Calu3 (cell line): ENCODE measurements at regions of chr14 and their contacts with region 1.

Region 1: DNA sequence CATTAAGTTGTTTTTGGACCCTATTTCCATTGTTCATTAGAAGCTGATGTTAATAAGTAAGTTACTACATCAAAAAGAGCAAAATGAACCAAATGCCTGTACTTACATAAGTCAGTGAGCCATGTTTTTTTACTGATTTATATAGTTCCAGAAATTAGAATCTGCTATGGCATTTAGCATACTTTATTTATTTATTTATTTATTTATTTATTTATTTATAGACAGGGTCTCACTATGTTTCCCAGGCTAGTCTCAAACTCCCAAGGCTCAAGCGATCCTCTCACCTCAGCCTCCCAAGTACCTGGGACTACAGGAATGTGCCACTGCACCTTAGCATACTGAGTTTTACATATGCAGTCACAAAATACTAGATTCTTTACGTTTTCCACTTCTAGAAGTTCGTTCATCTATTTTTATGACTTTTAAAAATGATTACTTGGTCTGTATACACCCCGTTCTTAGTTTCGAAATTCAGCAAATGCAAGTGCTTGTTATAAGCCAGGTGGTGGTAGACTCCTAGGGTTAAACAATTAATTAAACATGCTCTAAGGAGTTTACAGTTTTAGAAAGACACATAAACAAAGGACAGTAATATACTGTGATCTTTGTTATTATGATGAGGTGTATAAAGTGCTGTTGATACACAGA is 69.8 kb downstream of the SCFD1 start:
- DNase-seq: no peak
- H3K4me3 Mint-ChIP-seq: no peak overlapping the region
- H3K27ac Mint-ChIP-seq: no peak overlapping the region
- H3K4me1 Mint-ChIP-seq: no peaks in the 10 kb centered on the region
- H3K27me3 Mint-ChIP-seq: no peaks in the 10 kb centered on the region
- CTCF ChIP-seq: no peak

Region 2: GRCh38 chr14:30417121-30417520 is 274.8 kb before region 1 on chr14:
- CTCF ChIA-PET with region 1: no interaction called
- intact Hi-C with region 1: loop called (anchors 5 kb)
- DNase-seq: no peak
- H3K4me3 Mint-ChIP-seq: no peak overlapping the region
- H3K27ac Mint-ChIP-seq: no peak overlapping the region
- H3K4me1 Mint-ChIP-seq: peaks cover 8% of the 10 kb centered on the region
- H3K27me3 Mint-ChIP-seq: peaks cover 14% of the 10 kb centered on the region
- CTCF ChIP-seq: no peak